ACHN (cell line): ENCODE measurements at regions of chr7 and their contacts with region 1.

Region 1: DNA sequence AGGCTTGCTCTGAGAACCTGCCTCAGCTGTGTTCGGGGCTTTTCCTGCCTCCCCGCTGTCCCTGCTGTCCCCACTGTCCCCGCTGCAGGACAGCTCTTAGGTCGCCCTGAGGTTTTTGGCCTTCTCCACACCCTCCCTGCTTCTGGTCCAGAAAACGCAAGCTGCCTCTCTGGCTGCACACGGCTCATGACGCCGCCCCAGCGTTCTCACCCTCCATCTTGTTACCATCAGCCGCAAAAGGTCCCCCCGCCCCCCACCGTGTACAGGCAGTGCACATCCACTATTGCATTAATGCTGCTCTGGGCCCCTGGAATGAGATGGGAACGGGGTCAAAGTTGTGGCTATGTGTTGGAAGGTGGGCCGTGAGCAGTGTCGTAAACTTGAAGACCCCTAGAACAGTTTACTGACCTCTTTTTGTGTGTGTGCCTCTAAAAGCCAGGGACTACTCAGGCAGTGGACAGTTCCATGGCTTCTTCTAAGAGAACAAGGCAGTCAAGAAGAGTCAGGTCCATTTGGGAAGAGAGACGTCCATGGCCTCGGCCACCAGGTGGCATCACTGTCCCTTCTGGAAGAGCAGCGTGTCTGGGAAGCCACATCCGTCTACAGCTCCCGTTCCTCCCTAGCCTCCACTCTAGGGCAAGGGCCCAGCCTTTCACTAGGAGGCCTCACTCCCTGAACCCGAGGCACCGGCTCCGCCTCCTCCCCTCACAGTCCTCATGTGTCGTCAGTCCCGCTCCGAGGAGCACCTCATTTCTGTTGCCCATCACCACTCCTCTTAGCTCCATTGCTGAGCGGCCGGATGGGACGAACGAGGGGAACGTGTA is 38.5 kb upstream of the MKRN1 start:
- DNase-seq: peak; percentile 95

Region 2: DNA sequence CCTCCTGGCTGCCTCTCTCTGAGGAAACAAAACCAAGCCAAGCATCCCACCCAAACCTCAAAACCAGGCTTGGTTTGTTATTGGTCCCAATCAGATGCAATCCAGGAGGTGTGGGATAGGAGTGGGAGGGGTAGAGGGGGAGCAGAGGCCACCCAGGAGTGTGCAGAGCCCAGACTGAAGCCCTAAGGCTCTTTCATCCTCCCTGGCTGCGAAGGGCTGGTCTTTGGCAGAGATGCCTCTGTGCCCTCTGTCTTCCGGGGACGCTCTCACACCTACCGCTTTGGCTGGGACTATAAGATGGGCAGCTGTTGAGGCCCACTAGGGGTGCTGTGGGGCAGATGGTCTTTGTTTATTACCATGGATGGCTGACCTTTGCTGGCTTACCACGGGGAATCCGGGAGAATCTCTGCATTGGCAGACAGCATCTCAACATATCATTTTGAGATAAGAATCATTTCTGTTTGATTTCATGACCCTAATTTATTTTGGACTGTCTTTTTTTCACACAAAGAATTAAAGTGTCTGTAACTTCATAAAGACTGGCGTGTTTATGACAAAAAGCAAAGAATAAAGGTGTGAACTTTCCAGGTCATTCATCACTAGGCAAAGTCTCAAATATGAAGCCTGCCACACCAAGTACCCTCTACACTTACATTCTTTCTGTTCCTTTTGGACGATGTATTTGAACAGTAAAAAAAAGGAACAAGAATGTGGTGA is 129.3 kb after region 1 on chr7:
- in situ Hi-C with region 1: loop called (anchors 25 kb)
- DNase-seq: peak; percentile 83

Region 3: DNA sequence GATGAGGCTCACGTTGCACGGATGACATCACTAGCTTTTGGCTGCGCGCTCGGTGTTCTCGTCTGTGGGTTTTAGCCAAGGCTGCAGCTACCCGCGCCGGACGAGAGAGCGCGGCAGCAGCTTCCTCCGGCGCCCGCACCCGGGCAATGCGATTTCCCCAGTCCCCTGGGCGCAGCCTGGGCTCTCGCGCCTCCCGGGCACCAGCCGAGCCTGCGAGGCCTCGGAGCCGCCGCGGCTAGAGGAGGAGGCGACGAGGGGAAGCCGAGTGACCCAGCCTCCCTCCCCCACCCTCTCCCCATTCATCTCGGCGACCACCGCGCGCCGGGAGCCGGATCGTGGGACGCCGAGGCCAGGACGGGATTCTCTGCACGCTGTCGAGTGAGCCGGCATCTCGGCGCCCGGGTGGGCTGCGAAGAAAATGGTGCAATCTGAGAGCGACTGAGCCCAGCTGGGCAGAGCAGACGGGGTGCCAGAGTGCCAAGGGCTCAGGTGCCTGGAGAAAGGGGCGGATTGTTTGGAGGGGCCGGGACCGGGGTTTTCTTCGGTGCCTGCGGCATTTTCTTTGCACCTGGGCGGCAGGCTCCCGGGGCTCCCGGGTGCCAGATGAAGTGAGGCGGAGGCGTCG is 554.9 kb after region 1 on chr7:
- in situ Hi-C with region 1: no loop called
- DNase-seq: peak; percentile 97